Activated CD8-positive, alpha-beta T cell treated with anti-CD3 and anti-CD28 coated beads, Interleukin-2, amount 10 ng/mL, durations not matched to agents 7 days and 5 days (primary cell): ENCODE measurements at regions of chr12 and their contacts with region 1.

Region 1: GRCh38 chr12:122078141-122079032 is at the start of gene MLXIP:
- DNase-seq: peak; percentile 93
- ATAC-seq: peak; percentile 81
- H3K4me3 Mint-ChIP-seq: peak within 1 kb of the TSS; percentile 86
- H3K27ac Mint-ChIP-seq: peak within 1 kb of the TSS; percentile 83
- H3K4me1 Mint-ChIP-seq: peaks cover 47% of the 10 kb centered on the region
- H3K27me3 Mint-ChIP-seq: peaks cover 5% of the 10 kb centered on the region
- total RNA-seq, gene MLXIP: 38.8 to 42.7 TPM

Region 2: DNA sequence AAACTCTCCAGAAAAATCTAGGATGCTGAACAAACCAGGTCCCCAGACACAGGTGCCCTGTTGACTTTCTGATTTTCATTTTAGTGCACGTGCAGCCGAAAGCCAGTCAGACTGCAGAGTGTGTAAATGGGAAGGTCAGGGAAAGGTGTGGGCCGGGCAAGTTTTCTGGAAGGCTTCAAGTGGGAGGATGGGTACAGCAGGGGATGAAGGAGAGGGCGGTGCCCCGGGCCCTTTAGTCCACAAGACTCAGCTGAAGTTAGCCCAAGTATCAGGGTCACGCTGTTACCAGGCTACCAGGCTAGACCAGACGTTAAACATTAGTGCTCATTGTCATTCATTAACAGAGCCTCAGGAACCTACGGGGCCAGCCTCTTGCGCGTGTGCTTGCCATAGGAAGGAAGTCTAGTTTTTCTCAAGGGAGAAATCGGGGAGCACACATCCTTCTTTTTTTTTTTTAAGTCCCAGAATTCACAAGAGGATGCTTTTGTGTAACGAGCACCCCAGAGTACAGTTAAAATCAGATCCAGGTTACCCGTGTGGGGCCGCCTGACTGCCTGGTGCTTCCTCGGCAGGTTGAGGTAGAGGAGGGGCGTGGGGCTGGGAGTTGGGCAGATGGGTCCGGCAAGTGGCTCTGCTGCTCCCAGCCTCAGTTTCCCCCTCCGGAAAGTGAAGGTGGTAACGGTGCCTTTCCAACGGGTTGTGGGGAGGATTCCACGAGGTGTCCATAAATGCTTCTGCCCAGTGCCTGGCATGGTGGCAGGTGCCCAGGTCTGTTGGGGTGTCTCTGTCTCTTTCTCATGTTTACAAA is 37.6 kb before region 1 on chr12:
- CTCF ChIA-PET with region 1: no interaction called
- POLR2A ChIA-PET with region 1: no interaction called
- DNase-seq: no peak
- ATAC-seq: no peak
- H3K4me3 Mint-ChIP-seq: no peak overlapping the region
- H3K27ac Mint-ChIP-seq: no peak overlapping the region
- H3K4me1 Mint-ChIP-seq: no peaks in the 10 kb centered on the region
- H3K27me3 Mint-ChIP-seq: no peaks in the 10 kb centered on the region

Region 3: DNA sequence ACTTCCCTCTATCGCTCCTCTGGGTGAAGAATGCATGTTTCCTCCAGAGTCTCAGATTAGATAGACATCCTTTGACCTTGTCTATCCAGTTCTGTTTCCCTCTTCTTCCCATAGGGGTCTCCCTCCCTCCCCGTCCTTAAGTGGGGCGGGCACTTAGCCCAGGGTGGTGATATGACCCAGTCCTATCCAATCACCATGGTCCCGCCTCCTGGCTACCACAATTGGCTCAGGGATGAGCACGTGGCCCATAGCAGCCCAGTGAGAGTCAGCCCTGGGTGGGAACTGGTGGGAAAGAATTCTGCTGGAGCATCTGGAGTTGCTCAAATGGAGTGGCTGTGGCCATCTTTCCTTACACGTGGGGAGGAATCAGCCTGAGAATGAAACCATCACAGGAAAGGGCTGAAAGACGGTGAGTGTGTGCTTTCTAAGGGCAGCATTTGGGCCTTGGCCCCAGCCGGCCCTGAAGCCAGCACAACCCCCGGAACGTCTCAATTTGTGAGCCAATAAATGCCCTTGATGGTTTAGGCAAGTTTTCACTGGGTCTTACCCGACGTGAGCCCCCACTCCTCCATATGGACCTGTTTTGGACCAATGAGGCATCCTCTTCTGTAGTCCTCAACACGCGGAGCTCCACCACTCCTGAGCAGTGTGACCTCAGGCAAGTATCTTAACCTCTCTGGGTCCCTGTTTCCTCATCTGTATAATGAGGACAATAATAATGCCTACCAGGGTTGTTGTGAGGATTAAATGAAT is 14.2 kb before region 1 on chr12:
- CTCF ChIA-PET with region 1: interaction called, 33 read pairs
- POLR2A ChIA-PET with region 1: interaction called, 6 read pairs
- DNase-seq: peak; percentile 50
- ATAC-seq: peak; percentile 73
- H3K4me3 Mint-ChIP-seq: no peak overlapping the region
- H3K27ac Mint-ChIP-seq: peak overlapping the region; percentile 22
- H3K4me1 Mint-ChIP-seq: peaks cover 33% of the 10 kb centered on the region
- H3K27me3 Mint-ChIP-seq: no peaks in the 10 kb centered on the region

Region 4: GRCh38 chr12:122090759-122091515 is 12.6 kb after region 1 on chr12:
- CTCF ChIA-PET with region 1: interaction called, 13 read pairs
- POLR2A ChIA-PET with region 1: interaction called, 3 read pairs
- DNase-seq: no peak
- ATAC-seq: no peak
- H3K4me3 Mint-ChIP-seq: no peak overlapping the region
- H3K27ac Mint-ChIP-seq: peak overlapping the region; percentile 58
- H3K4me1 Mint-ChIP-seq: peaks cover 50% of the 10 kb centered on the region
- H3K27me3 Mint-ChIP-seq: no peaks in the 10 kb centered on the region

Region 5: DNA sequence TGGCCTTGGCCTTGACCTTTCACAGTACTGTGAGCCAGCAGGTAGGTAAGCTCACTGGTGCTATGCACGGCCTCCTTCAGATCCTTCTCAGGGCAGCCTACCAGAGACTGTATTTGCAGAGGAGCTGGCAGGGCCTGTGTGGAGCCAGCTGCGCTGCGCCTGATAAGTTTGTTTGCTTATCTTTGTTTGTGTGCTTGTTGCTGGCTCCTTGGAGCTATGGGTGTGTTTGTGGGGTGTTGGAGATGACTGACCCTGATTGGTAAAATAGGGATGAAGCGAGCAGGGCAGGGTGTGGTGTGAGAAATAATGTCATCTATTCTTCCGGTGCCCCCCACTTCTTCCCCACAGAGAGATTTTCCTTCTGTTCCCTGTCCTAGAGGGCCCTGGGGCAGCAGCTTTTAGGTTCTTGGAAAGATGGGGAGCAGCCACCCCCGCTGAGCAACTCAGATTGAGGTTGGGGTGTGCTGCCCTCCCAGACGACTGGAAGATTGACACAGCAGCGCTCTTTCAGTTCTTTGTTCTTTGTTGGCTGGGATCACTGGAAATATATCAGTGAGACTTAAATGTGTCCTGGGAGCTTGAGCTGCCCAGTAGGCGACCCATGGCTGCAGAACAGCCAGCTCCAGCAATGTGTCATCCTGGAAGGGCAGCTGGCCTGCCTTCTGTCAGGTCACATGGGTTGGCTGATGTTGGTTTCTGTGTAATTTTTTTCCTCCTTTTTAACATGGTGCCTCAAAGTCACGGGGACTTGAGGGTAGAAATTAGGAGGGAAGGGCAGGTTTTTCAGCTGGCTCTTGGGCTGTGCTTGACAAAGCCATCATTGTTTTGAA is 19.8 kb after region 1 on chr12:
- CTCF ChIA-PET with region 1: interaction called, 5 read pairs
- POLR2A ChIA-PET with region 1: interaction called, 10 read pairs
- DNase-seq: no peak
- ATAC-seq: no peak
- H3K4me3 Mint-ChIP-seq: no peak overlapping the region
- H3K27ac Mint-ChIP-seq: peak overlapping the region; percentile 66
- H3K4me1 Mint-ChIP-seq: peaks cover 59% of the 10 kb centered on the region
- H3K27me3 Mint-ChIP-seq: no peaks in the 10 kb centered on the region

Region 6: GRCh38 chr12:122107261-122107660 is 28.9 kb after region 1 on chr12:
- CTCF ChIA-PET with region 1: interaction called, 30 read pairs
- POLR2A ChIA-PET with region 1: interaction called, 5 read pairs
- DNase-seq: no peak
- ATAC-seq: no peak
- H3K4me3 Mint-ChIP-seq: no peak overlapping the region
- H3K27ac Mint-ChIP-seq: peak overlapping the region; percentile 48
- H3K4me1 Mint-ChIP-seq: peaks cover 64% of the 10 kb centered on the region
- H3K27me3 Mint-ChIP-seq: no peaks in the 10 kb centered on the region

Region 7: DNA sequence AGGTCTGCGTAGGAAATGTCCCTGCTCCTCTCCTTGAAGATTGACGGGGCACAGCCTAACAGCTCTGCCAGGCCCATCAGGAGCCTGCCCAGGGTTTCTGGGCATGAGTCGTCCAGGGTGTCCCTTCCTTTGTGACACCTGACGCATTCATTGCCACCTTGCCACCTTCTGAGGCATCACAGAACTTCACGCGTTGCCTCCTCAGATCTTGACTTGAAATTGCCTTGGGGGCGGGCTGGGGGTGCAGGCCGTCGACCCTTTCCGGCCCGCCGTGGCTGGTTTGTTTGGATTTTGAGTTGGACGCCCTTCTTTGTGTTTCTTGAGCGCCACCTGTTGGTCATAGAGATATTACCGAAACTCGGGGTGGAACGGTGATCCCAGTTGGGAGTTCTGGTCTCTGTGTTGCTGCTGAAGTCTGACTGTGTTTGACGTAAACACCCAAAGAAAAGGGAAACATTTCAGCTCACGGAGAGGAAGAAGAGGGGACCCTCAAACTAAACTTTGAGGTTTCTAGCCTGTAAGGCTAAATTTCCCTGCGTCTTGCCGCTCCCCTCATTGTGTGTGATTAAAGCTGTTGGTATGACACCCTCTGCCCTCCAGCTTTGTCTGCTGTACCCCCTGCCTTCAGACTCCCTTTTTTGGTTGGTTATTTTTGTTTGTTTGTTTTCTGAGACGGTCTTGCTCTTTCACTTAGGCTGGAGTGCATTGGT is 44.8 kb after region 1 on chr12:
- CTCF ChIA-PET with region 1: interaction called, 18 read pairs
- POLR2A ChIA-PET with region 1: no interaction called
- DNase-seq: peak; percentile 80
- ATAC-seq: peak; percentile 62
- H3K4me3 Mint-ChIP-seq: no peak overlapping the region
- H3K27ac Mint-ChIP-seq: peak overlapping the region; percentile 67
- H3K4me1 Mint-ChIP-seq: peaks cover 33% of the 10 kb centered on the region
- H3K27me3 Mint-ChIP-seq: no peaks in the 10 kb centered on the region